Breast epithelium (tissue), 4 donors: ENCODE measurements at regions of chr20 and their contacts with region 1.

Region 1: DNA sequence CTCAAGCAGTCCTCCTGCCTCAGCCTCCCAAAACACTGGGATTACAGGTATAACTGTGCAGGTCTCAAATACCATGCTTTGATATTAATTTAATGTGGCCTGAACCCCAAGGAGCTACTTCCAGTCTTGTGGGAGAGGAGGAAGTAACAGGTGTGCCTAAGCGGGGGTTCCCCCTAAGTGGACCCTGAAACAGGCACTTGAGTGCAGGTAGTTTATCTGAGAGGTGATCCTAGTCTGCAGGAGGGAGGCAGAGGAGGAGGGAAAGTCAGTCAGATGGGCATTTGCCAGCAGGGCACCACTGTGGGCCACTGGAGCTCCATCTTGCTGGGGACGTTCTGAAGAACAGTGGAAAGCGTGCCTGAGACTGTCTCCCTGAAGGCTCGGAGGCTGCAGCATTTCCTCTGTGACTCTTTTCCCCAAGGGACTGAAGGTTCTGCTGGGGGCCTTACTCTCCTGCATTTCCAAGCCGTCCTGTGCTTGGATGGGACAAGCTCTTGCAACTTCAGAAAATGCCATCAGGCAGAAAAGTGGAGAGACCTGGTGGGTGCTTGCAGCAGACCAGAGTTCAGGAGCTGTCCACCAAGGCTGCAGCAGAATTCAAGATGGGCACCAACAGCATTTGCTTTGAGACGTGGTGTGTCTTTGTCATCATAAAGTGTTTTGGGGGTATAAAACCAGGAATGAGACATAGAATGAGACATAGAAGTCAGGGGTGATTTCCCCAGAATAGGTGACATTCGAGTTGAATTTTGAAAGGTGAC is 4.6 kb upstream of the DLGAP4 start:
- DNase-seq: no peak
- H3K4me3 ChIP-seq: no peak overlapping the region
- H3K27ac ChIP-seq: no peak overlapping the region
- H3K4me1 ChIP-seq: peaks cover 0 to 2% of the 10 kb centered on the region in 2 donors
- H3K27me3 ChIP-seq: peaks cover 0 to 60% of the 10 kb centered on the region in 2 donors
- CTCF ChIP-seq: no peak
- POLR2A ChIP-seq: no peak

Region 2: DNA sequence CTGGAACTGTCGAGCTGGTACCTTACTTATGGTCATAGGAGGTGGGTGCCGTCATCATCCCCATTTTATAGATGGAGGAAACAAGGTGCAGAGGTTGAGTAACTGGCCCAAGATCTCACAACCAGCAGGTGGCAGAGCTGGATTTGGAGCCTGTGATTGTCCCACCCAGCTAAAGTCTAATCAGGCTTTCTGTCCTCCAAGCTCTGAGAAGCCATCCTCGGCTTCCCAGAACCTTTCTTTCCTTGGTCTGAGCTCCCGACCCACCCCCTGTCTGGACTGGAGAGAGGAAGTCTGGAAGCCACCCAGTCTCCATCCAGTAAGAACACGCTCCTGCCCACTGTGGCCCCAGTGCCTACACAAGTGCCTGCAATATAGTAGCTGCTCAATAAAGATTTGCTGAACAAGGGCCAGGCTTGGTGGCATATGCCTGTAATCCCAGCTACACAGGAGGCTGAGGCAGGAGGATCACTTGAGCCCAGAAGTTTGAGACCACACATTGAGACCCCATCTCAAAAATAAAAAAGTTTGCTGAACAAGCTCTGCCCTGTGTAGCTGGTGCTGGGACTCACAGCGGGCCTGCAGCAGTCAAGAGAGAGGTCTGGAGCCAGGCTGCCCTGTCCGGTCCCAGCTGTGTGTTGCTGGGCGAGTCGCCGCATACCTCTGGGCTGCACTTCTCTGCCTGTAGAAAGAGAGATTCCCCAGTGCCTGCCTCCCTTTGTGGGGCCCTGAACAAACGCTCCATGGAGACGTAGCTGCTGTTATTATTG is 27.9 kb before region 1 on chr20:
- intact Hi-C with region 1: loop called (anchors 1 kb)
- DNase-seq: no peak
- H3K4me3 ChIP-seq: no peak overlapping the region
- H3K27ac ChIP-seq: no peak overlapping the region
- H3K4me1 ChIP-seq: no peaks in the 10 kb centered on the region
- H3K27me3 ChIP-seq: peaks cover 0 to 11% of the 10 kb centered on the region in 2 donors
- CTCF ChIP-seq: no peak
- POLR2A ChIP-seq: no peak